ENCODE measurements at regions of chr20 and their contacts with region 1.

Region 1: DNA sequence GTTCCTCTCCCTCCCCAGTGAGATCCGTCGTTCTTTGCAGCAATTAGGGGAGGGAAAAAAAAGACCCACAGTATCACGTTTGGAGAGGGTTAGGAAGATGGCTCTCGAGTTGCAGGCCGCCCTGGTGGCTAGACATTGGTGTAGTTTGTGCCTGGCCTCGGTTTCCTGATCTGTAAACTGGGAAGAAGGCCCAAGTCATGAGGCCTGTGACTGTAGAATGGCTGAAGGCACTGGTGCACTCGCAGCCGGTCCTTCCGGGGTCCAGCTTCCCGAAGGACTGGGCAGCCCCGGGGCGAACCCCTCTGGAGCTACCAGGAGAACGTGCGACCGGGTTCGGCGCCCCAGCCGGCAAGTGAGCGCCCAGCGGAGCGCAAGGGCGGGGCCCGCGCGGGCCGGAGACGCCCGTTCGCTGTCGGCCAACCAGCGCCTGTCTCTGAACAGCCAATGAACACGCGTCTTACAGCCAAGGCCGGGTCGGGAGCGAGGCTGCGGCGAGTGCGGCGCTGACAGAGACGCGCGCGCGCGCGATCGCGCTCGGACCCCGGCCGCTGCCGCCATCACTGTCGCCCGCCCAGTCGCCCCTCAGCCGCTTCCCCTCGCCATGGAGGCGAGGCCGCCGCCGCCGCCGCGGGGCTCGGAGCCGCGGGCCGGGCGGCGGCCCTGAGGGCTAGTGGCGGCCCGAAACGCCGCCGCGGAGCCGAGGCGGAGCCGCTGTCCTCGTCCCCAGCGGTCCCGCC is at the start of gene PTPRA:
- DNase-seq: peak; percentile 90
- H3K4me3 Mint-ChIP-seq: peak within 1 kb of the TSS; percentile 92
- H3K27ac Mint-ChIP-seq: peak within 1 kb of the TSS; percentile 95
- H3K4me1 Mint-ChIP-seq: peaks cover 49% of the 10 kb centered on the region
- H3K27me3 Mint-ChIP-seq: no peaks in the 10 kb centered on the region
- total RNA-seq, gene PTPRA: 64.0 and 67.5 TPM in 2 replicates

Region 2: DNA sequence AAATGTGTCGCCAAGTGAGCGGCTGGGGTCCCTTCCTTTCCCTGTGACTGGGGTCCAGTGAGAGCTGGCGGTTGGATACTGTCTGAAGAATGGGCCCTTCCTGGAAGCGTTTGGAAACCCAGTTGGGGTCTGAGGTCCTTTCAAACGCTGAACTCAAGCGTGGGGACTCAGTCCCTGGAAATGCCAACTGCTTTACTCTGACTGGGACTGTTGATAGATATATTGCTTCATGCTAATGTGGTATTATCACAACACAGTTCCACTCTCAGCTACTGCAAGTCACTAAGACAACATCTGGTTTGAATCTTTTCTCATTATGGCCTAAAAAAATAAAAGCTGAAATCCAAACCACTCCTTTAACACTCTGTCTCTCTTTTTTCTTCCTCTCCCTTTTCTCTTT is 1778.4 kb before region 1 on chr20:
- intact Hi-C with region 1: no loop called
- DNase-seq: no peak
- H3K4me3 Mint-ChIP-seq: no peak overlapping the region
- H3K27ac Mint-ChIP-seq: no peak overlapping the region
- H3K4me1 Mint-ChIP-seq: no peaks in the 10 kb centered on the region
- H3K27me3 Mint-ChIP-seq: peaks cover 8% of the 10 kb centered on the region

Region 3: GRCh38 chr20:2688041-2688591 is 185.1 kb before region 1 on chr20:
- intact Hi-C with region 1: loop called (anchors 1 kb)
- DNase-seq: peak; percentile 76
- H3K4me3 Mint-ChIP-seq: peak overlapping the region; percentile 16
- H3K27ac Mint-ChIP-seq: peak overlapping the region; percentile 77
- H3K4me1 Mint-ChIP-seq: peaks cover 34% of the 10 kb centered on the region
- H3K27me3 Mint-ChIP-seq: peaks cover 13% of the 10 kb centered on the region

Region 4: DNA sequence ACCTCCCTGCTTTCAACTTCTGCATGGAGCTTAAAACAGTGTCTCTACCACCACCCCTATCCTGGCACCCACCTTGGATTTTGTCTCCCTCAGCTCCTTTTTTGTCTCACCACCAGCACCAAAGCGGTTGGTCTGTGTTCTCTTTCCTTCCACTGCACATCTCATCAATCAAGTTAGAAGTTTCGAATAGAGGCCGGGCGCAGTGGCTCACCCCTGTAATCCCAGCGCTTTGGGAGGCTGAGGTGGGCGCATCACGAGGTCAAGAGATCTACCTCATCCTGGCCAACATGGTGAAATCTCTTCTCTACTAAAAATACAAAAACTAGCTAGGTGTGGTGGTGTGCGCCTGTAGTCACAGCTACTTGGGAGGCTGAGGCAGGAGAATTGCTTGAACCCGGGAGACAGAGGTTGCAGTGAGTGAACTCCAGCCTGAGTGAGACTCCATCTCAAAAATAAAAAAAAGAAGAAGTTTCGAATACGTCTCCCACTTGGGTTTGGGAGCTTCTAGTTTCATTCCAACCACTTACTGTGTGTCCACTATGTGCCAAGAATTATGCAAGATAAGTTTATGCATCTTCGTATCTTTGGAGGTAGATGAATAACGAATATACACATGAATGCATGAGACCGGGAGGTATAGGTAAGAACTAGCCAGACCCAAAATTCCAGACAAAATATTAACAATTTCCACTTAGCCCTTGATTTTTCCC is 38.6 kb before region 1 on chr20:
- intact Hi-C with region 1: loop called (anchors 5 kb)
- DNase-seq: no peak
- H3K4me3 Mint-ChIP-seq: no peak overlapping the region
- H3K27ac Mint-ChIP-seq: no peak overlapping the region
- H3K4me1 Mint-ChIP-seq: peaks cover 13% of the 10 kb centered on the region
- H3K27me3 Mint-ChIP-seq: peaks cover 8% of the 10 kb centered on the region

Region 5: DNA sequence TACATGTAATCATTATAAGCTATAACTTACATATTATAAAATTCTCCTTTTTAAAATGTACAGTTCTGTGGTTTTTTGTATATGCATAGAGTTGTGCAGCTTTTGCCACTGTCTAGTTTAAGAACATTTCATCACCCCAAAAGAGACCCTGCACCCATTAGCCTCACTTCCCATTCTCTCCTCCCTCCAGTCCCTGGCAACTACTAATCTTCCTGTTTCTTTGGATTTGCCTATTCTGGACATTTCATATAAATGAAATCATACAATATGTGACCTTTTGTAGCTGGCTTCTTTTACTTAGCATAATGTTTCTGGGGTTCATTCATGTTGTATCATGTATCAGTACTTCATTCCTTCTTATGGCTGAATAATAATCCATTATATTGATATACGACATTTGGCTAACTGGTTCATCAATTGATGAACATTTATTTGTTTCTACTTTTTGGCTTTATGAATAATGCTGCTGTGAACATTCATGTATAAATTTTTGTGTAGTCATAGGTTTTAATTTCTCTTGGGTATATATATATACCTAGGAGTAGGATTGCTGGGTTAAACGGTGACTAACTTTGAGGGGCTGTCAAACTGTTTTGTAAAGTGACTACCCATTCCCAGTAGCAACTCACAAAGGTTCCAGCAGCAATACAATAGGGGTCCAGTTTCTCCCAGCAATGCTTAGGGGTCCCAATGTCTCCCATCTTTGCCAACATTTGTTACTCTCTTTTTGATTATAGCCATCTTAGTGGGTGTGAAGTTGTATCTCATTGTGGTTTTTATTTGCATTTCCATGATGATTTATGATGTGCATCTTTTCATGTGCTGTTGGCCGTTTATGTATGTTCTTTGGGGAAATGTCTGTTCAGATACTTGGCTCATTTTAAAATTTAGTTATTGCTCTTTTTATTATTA is 10.8 kb after region 1 on chr20:
- intact Hi-C with region 1: loop called (anchors 1 kb)
- DNase-seq: no peak
- H3K4me3 Mint-ChIP-seq: no peak overlapping the region
- H3K27ac Mint-ChIP-seq: peak overlapping the region; percentile 60
- H3K4me1 Mint-ChIP-seq: peaks cover 40% of the 10 kb centered on the region
- H3K27me3 Mint-ChIP-seq: no peaks in the 10 kb centered on the region

Region 6: DNA sequence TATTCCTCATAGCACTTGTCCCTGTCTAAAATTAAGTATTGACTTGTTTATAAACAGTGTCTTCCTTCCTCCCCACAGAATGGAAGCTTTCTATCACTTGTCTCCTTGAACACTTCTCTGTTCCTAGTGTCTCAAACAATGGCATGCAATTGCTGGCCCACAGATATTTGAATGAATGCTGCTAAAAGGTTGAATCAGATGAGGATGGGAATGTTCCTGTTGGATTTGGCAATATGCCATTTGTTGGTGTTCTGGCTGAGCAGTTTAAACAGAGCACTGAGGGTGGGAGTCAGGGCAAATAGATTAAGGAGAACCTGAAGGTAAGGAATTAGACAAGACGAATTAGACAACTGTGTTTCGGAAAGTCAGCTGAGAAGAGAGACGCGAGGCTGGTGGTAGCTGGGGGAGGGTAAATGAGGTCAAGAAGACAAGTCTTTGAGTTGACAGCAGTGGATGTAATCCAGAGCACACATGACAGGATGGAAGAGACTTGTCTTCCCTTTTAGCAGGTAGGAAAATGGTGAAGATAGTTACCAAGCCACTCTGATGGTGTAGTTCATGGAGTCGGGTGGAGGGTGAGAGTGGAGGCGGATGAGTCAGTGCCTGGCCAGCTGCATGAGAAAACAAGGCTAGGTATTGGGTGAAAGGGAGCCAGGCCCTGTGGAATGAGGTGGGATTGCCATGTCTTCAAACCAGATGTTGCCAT is 111.9 kb after region 1 on chr20:
- intact Hi-C with region 1: loop called (anchors 1 kb)
- DNase-seq: no peak
- H3K4me3 Mint-ChIP-seq: no peak overlapping the region
- H3K27ac Mint-ChIP-seq: no peak overlapping the region
- H3K4me1 Mint-ChIP-seq: peaks cover 41% of the 10 kb centered on the region
- H3K27me3 Mint-ChIP-seq: no peaks in the 10 kb centered on the region

Region 7: GRCh38 chr20:3045816-3046676 is 172.9 kb after region 1 on chr20 and contains the start of gene MRPS26:
- intact Hi-C with region 1: loop called (anchors 1 kb)
- DNase-seq: peak; percentile 80
- H3K4me3 Mint-ChIP-seq: peak within 1 kb of the TSS; percentile 95
- H3K27ac Mint-ChIP-seq: peak within 1 kb of the TSS; percentile 78
- H3K4me1 Mint-ChIP-seq: peaks cover 11% of the 10 kb centered on the region
- H3K27me3 Mint-ChIP-seq: no peaks in the 10 kb centered on the region
- total RNA-seq, gene MRPS26: 106 and 114 TPM in 2 replicates

Region 8: DNA sequence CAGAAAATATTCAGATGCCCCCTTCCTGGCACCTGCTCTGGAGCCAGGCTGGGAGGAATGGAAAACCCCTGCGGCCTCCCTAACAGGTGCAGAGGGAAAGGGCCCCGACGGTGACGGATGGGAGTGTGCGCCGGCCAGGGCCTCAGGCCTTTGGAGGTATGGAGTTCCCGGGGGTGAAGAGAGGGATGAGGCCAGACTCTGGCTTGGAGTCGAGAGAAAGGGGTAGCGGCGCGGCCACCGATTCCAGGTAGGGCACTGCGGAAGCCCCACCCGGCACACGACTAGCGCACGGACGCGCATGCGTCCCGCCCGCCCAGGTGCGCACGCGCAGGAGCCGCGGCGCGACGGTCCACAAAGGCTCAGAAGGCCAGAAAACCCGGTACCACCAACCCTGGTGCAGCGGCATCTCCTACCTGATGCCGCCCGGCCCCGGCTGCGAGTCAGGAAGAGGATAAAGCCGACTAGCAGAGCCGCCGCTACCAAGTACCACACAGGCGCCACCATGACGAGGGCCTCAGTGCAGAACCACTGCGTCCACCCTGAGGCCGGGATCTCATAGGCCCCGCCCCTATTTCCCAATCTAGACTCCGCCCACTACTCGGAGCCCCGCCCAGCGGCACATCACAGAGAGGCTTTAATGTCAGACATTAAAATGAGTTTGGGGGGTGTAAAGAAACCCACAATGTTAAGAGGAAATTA is 331.1 kb after region 1 on chr20 and contains the start of gene DDRGK1:
- intact Hi-C with region 1: loop called (anchors 10 kb)
- DNase-seq: peak; percentile 86
- H3K4me3 Mint-ChIP-seq: peak within 1 kb of the TSS; percentile 96
- H3K27ac Mint-ChIP-seq: peak within 1 kb of the TSS; percentile 97
- H3K4me1 Mint-ChIP-seq: peaks cover 23% of the 10 kb centered on the region
- H3K27me3 Mint-ChIP-seq: no peaks in the 10 kb centered on the region
- total RNA-seq, gene DDRGK1: 67.5 and 72.3 TPM in 2 replicates

Measured in activated T-helper 1 cell treated with anti-CD3 and anti-CD28 coated beads, Interleukin-12 subunit alpha, Interleukin-12 subunit beta, Interleukin-2, Interleukin-4 antibody, amounts not matched to agents 30 ng/mL and 10 ng/mL and 1 ng/mL, durations not matched to agents 14 hours and 24 hours and 36 hours (primary cell).